Activated CD4-positive, alpha-beta memory T cell treated with anti-CD3 and anti-CD28 coated beads for 36 hours (primary cell): ENCODE measurements at regions of chr12 and their contacts with region 1.

Region 1: DNA sequence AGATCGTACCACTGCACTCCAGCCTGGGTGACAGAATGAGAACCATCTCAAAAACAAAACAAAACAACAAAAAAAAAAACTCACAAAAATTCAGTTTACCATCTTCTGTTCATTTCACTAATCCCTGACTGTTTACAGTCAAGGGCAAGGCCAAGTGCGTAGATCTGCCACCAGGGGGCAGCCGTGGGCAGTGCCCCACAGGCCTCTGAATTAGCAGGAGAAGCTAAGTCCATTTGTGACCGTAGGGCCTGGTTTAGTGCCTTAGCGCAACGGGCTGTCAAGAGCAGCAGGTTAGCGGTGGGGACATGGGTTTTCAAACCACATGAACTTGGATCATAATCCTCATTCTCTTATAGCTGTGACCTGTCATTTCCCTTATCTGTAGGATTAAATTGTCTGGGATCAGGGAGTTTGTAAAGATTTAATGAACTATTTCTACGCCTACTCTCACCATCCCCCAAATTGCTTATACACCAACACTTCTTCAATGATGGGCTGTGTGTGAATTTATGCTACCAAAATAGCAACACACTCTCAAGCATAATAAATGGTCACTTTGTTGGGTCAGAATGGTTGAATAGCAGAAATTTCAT is 49.0 kb downstream of the KCTD10 start:
- DNase-seq: peak; percentile 80
- H3K4me3 Mint-ChIP-seq: no peak overlapping the region
- H3K27ac Mint-ChIP-seq: no peak overlapping the region
- H3K4me1 Mint-ChIP-seq: peaks cover 1% of the 10 kb centered on the region
- H3K27me3 Mint-ChIP-seq: peaks cover 2% of the 10 kb centered on the region

Region 2: DNA sequence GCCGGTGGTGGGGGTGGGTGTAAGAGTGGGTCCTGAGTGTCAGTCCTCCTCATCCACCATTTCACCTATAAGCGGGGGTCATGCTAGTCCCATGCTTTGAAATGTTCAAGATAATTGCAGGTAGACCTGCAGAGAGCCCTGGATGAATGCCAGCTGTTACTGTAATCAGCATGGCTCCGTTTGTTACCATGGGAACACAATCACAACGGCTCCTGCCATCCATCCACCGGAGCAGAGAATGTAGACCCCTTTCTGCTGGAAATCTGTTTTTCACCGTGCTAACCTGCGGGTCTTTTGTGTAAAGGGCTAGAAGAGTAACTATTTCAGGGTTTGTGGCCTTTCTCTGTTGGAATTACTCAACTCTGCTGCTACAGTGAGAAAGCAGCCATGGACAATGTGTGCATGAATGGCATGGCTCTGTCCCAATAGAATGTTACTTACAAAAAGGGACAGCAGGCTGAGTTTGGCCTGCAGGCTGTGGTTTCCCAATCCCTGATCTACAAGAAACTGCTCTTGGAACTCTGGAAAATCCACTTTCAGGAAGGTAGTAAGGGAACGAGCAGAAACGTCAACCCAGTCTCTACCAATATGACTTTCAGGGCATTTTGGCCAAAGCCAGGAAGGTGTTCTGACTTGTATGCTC is 12.8 kb after region 1 on chr12:
- CTCF ChIA-PET with region 1: interaction called, 14 read pairs
- POLR2A ChIA-PET with region 1: no interaction called
- intact Hi-C with region 1: no loop called
- DNase-seq: no peak
- H3K4me3 Mint-ChIP-seq: no peak overlapping the region
- H3K27ac Mint-ChIP-seq: no peak overlapping the region
- H3K4me1 Mint-ChIP-seq: no peaks in the 10 kb centered on the region
- H3K27me3 Mint-ChIP-seq: no peaks in the 10 kb centered on the region

Region 3: DNA sequence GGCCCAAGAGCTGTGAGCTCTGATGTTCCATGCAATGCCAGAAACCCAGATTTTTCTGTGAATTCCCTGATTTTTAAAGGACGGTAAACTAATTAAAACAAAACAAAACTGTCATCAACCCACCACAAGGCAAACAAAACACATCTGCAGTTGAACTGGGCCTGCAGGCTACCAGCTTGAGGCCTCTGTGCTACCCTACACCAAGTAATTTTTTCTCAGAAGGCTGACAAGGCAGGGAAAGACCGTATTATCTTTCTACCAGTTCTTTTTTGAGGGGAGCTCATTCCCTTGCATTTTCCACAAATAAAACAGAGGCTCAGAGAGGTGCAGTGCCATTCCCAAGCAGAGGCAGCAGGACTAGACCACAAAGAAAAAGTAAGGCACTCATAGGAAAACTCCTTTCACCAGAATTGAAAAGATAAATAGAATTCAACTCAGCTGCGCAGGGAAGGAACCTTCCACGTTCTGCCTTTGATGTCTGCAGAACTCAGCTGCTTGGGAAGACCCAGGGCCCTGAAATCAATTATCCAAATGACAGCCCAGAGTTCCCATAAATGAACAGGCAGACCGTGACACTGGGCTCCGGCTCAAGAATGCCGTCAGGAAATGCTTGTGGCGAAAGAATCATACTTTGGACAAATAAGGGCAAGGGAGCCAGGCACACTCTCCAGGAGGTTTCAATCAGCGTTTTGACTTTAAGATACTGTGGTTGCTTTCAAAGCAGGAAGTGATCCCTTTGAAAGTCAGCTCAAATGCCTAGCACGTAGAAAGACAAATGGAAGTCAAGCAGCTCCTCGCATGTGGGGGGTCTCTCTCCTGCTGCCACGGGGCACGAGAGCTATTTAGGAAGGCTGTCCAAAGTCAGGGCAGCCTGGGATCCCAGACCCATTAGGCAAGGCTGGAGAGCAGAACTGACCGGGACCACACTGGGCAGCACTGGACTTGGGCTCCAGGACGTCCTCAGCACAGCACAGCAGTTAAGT is 34.9 kb after region 1 on chr12:
- CTCF ChIA-PET with region 1: interaction called, 15 read pairs
- POLR2A ChIA-PET with region 1: no interaction called
- intact Hi-C with region 1: no loop called
- DNase-seq: no peak
- H3K4me3 Mint-ChIP-seq: no peak overlapping the region
- H3K27ac Mint-ChIP-seq: no peak overlapping the region
- H3K4me1 Mint-ChIP-seq: peaks cover 41% of the 10 kb centered on the region
- H3K27me3 Mint-ChIP-seq: no peaks in the 10 kb centered on the region